ENCODE measurements at regions of chr20 and their contacts with region 1.

Region 1: DNA sequence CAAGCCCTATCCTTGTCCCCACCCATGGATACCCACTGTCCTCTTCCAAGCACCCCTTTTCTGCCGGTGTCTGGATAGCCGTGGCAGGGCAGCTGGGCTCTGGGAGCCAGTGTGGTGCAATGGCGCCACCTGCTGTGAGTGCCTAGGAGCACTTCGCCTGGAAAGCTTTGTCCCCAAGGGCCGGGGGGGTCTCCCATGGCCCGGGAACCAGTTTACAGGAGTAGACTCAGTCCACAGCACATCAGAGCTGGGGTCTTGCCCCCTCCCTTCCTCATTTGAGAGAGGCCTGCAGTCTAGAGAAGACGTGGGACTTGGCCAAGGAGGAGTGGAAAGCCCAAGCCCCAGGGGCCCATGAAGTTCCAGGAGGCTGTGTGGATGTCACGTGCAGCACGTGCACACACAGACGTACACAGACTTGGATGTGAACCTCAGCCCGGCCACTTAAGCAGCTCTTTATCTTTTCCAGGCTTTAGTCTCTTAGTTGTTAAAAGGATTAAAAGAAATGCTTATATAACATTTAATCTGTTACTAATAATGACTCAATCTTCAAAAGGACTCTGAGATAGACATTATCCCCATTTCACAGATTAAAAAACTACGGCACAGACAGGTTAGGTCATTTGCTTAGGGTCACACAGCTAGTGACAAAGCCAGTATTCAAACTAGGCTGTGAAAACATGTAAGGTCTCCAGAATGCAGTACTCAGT is 40.9 kb upstream of the CDH22 start:
- DNase-seq: peak; percentile 62
- ATAC-seq: peak; percentile 67 to 82

Region 2: DNA sequence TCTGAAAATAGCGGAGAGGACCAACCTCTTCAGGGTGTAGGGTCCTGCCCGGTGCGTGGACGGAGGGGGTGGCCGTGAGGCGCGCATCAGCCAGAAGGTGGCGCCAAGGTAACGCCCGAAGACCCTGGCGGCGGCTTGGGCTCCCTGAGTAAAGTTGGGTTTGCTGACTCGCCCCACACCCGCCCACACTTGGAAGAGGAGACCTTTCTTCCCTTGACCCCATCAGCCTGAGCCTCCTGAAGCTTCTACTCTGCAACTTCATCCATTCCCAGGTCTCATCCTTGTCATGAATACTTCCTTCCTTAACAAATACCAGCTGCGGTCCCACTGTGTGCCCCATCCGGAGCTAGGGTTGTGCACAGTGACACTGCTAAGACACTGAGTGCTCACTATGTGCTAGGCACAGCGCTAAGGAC is 216.5 kb before region 1 on chr20:
- intact Hi-C with region 1: loop called (anchors 1 to 5 kb)
- DNase-seq: peak; percentile 77
- ATAC-seq: peak; percentile 89 to 92

Region 3: GRCh38 chr20:46406199-46406985 is 57.2 kb after region 1 on chr20 and contains the start of gene ELMO2:
- intact Hi-C with region 1: no loop called
- DNase-seq: peak; percentile 99
- ATAC-seq: peak; percentile 94 to 96
- total RNA-seq, gene ELMO2: 29.5 to 36.1 TPM

Region 4: DNA sequence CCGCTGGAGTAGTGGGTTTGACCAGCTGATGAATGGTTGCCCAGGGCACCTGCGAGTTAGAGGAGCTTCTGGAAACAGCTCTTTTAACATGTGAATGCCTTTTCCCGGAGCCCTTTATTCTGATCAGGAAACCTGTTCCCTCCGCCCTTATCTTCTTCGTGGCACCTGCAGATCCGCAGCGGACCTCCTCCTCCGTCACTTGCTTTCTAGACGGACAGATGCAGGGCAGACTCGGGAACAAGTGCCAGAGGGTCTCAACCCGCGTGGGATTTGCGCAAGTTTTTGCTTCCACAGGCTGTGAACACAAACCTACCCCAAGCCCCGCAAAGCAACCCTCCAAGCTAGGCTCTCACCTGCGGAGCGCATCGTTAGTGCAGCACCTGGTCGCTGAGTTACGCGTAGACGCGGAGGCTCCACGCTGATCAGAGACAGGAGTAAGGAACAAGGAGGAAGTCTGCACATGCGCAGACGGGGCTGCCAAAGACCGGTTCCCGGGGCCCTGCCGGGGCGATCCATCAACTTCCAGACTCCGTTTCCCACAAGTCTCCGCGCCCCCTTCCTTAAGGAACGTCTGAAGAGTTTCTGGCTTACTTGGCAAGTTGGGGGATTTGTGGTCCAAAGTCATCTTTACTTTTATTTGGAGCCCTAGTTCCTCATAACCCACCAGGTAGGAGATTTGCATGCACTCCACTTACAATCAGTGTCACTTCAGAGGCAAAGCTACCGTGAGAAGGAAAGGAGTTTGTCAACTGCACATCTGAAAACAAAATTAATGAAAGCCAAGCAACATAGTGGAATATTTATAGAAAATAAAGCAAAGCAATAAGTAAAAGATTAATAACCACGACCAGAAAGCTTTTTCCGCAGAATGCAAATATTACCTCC is 109.9 kb after region 1 on chr20:
- intact Hi-C with region 1: no loop called
- DNase-seq: peak; percentile 81
- ATAC-seq: peak in 1 of 2 donors; percentile 73